ENCODE measurements at regions of chr12 and their contacts with region 1.

Region 1: DNA sequence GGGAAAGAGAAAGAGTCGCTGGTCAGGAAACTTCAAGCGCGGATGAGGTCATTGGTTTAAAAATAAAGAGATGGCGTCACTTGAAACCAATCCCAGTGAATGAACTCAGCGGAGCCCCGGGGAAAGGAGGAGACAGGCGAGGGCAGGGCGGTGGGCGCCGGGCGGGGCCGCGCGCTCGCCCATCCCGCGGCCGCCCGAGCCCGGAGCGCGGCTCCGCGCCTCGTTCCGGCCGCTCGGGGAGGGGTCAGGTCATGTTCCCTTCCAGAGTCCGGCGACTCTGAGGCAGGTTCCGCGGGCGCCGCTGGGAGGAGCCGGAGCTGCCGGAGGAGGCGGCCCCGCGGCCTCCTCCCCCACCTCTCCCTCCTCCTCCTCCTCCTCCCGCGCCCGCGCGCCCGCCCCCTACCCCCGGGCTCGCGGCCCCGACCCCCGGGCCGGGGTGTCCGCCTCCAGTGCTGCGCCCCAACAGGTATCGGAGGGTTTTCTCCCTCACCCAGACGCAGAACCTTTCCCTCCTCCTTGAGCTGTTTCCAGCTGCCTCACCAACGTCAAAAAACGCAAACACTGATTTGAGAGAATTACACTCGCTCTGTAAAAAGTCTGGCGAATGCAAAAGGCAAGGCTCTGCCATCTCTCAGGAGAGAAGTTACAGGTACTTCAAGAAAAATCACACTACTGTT is at the start of gene DUSP16:
- DNase-seq: peak in 1 of 2 donors; percentile 98
- H3K4me3 ChIP-seq: peak within 1 kb of the TSS; percentile 89 to 99
- H3K27ac ChIP-seq: peak within 1 kb of the TSS; percentile 100
- H3K4me1 ChIP-seq: peaks cover 31% of the 10 kb centered on the region
- H3K27me3 ChIP-seq: no peaks in the 10 kb centered on the region
- CTCF ChIP-seq: no peak
- POLR2A ChIP-seq: peak in 1 of 2 donors; percentile 83
- total RNA-seq, gene DUSP16: 30.9 TPM

Region 2: GRCh38 chr12:12398026-12398859 is 164.5 kb before region 1 on chr12:
- intact Hi-C with region 1: loop called (anchors 10 kb)
- DNase-seq: peak in 1 of 2 donors; percentile 95
- H3K4me3 ChIP-seq: no peak overlapping the region
- H3K27ac ChIP-seq: peak overlapping the region; percentile 83
- H3K4me1 ChIP-seq: peaks cover 37% of the 10 kb centered on the region
- H3K27me3 ChIP-seq: no peaks in the 10 kb centered on the region
- CTCF ChIP-seq: peak in 1 of 3 experiments; percentile 25
- POLR2A ChIP-seq: no peak

Region 3: DNA sequence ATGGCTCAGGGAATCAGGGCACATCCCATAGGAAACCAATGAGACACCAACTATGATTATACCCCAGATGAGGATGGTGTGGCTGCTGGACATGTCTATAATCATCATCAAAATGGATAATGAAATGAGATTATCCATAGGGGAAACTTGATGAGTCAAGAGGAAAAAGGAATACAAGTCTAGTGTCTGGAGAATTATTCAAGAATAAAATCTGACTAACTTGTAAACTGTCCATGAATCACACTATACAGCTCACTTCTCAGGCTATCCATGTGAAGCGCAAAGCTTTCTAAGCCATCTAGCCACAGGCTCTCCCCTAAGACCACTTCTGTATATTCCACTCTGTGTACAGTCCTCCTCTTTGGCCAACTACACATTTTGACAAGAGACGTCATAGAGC is 52.6 kb before region 1 on chr12:
- intact Hi-C with region 1: loop called (anchors 5 kb)
- DNase-seq: no peak
- H3K4me3 ChIP-seq: no peak overlapping the region
- H3K27ac ChIP-seq: no peak overlapping the region
- H3K4me1 ChIP-seq: peaks cover 73% of the 10 kb centered on the region
- H3K27me3 ChIP-seq: no peaks in the 10 kb centered on the region
- CTCF ChIP-seq: no peak
- POLR2A ChIP-seq: no peak

Region 4: GRCh38 chr12:12724661-12725545 is 162.2 kb after region 1 on chr12:
- intact Hi-C with region 1: loop called (anchors 2 kb)
- DNase-seq: peak in 1 of 2 donors; percentile 99
- H3K4me3 ChIP-seq: peak overlapping the region; percentile 50 to 75
- H3K27ac ChIP-seq: peak overlapping the region; percentile 100
- H3K4me1 ChIP-seq: peaks cover 42% of the 10 kb centered on the region
- H3K27me3 ChIP-seq: no peaks in the 10 kb centered on the region
- CTCF ChIP-seq: peak in 1 of 3 experiments; percentile 17
- POLR2A ChIP-seq: peak; percentile 37 to 86

Region 5: GRCh38 chr12:12859690-12860089 is 297.0 kb after region 1 on chr12:
- intact Hi-C with region 1: no loop called
- DNase-seq: no peak
- H3K4me3 ChIP-seq: no peak overlapping the region
- H3K27ac ChIP-seq: no peak overlapping the region
- H3K4me1 ChIP-seq: no peaks in the 10 kb centered on the region
- H3K27me3 ChIP-seq: no peaks in the 10 kb centered on the region
- CTCF ChIP-seq: no peak
- POLR2A ChIP-seq: no peak

Measured in vagina (tissue), 2 donors.